Endothelial cell of umbilical vein (primary cell): ENCODE measurements at regions of chr6 and their contacts with region 1.

Region 1: GRCh38 chr6:33271458-33272274 is at the starts of genes RPS18 and VPS52:
- DNase-seq: peak; percentile 99
- H3K4me3 ChIP-seq: peak within 1 kb of the TSS; percentile 83 to 96 (median 86)
- H3K27ac ChIP-seq: peak within 1 kb of the TSS; percentile 85
- H3K4me1 ChIP-seq: peaks cover 47% of the 10 kb centered on the region
- H3K27me3 ChIP-seq: no peaks in the 10 kb centered on the region
- CTCF ChIP-seq: no peak
- POLR2A ChIP-seq: peak; percentile 99
- total RNA-seq, gene RPS18: 2,193 and 2,336 TPM in 2 replicates
- total RNA-seq, gene VPS52: 43.8 and 49.2 TPM in 2 replicates

Region 2: GRCh38 chr6:32317541-32317940 is 954.1 kb before region 1 on chr6:
- CTCF ChIA-PET with region 1: no interaction called
- POLR2A ChIA-PET with region 1: no interaction called
- dilution Hi-C with region 1: no loop called
- intact Hi-C with region 1: no loop called
- DNase-seq: no peak
- H3K4me3 ChIP-seq: no peak overlapping the region
- H3K27ac ChIP-seq: no peak overlapping the region
- H3K4me1 ChIP-seq: no peaks in the 10 kb centered on the region
- H3K27me3 ChIP-seq: peaks cover 6 to 8% of the 10 kb centered on the region in 2 experiments
- CTCF ChIP-seq: no peak
- POLR2A ChIP-seq: no peak

Region 3: DNA sequence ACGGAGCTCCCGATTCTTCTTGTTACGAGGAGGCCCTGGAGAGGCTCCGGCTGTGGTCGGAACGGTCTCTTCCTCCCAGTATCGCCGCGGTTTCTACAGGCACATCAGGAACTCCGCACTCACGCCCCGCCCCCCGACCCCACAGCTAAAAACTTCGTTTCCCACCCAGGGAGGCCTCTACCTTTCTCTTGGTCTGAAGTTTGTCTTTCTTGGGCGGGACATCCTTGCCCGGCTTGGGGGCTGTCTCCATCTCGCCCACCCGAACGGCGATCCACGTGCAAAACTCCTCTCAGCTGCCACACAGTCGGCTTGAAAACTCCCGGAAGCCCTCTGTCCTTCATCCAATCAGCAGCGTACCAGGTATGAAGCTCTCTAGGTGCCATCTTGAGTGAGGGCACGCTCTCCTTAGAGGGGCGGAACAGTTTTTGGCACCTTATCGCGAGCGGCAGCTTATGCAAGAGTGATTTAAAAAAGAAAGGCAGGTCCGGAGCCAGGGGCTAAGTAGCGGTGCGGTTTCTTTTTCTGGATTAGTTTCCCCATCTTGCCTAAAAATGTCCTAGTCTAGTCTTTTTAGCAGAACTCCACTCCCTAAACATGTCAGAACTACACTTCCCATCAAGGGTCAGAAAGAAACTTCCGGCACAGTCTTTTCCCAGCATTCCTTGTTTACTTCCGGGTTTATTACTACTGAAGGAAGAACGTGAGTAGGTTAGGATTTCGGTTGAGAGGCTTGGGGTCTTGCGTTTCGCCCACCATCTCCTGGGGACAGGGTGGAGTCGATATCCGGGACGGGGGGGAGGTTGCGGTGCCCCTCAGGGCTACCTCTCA is 17.5 kb after region 1 on chr6 and contains the starts of genes PFDN6 and WDR46:
- CTCF ChIA-PET with region 1: interaction called, 17 read pairs
- POLR2A ChIA-PET with region 1: interaction called, 6 read pairs
- dilution Hi-C with region 1: no loop called
- intact Hi-C with region 1: loop called (anchors 1 kb)
- DNase-seq: peak; percentile 96
- H3K4me3 ChIP-seq: peak within 1 kb of the TSS; percentile 59 to 96 (median 88)
- H3K27ac ChIP-seq: peak within 1 kb of the TSS; percentile 16
- H3K4me1 ChIP-seq: peaks cover 13% of the 10 kb centered on the region
- H3K27me3 ChIP-seq: no peaks in the 10 kb centered on the region
- CTCF ChIP-seq: no peak
- POLR2A ChIP-seq: peak; percentile 81
- total RNA-seq, gene PFDN6: 52.3 and 63.5 TPM in 2 replicates
- total RNA-seq, gene WDR46: 66.9 and 71.2 TPM in 2 replicates

Region 4: DNA sequence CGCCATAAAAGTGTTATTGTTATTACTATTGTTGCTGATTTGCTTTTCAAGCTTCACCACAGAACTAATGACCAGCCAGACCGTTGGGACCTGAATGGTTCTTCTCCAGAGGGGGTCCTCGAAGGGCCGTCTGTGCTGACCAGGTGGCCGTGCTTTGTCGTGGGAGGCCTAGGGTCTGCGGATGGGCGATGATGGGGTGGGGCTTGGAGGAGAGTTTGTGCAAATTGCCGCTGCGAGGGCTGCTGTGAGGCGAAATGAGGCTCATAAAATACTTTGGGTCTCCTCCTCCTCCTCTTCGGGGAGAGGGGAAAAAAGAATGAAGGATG is 51.9 kb after region 1 on chr6:
- CTCF ChIA-PET with region 1: interaction called, 4 read pairs
- POLR2A ChIA-PET with region 1: interaction called, 6 read pairs
- dilution Hi-C with region 1: no loop called
- intact Hi-C with region 1: loop called (anchors 1 kb)
- DNase-seq: no peak
- H3K4me3 ChIP-seq: peak overlapping the region; percentile 37 to 80 (median 80)
- H3K27ac ChIP-seq: no peak overlapping the region
- H3K4me1 ChIP-seq: peaks cover 43% of the 10 kb centered on the region
- H3K27me3 ChIP-seq: no peaks in the 10 kb centered on the region
- CTCF ChIP-seq: no peak
- POLR2A ChIP-seq: no peak

Region 5: DNA sequence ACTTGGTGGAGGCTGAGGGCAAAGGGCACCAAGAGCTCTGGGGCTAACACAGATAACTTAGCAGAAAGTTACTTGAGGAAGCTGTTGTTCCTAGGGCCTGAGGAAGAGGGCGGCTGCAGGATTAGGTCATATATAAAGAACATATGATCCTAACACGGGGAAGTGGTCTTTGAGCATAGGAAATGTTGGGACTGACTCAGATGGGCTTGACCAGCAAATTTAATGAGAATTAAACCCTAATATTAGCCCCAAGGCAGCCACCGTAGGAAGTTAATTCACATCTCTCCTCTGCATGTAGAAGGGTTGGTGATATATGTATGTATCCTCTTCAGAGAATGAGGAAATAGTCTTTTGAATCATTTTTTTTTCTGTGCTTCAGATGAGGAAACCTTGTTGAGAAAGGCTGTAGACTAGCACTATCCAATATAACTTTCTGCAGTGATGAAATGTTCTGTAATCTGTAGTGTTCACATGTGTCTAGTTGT is 173.5 kb after region 1 on chr6:
- CTCF ChIA-PET with region 1: no interaction called
- POLR2A ChIA-PET with region 1: no interaction called
- dilution Hi-C with region 1: no loop called
- intact Hi-C with region 1: no loop called
- DNase-seq: no peak
- H3K4me3 ChIP-seq: no peak overlapping the region
- H3K27ac ChIP-seq: no peak overlapping the region
- H3K4me1 ChIP-seq: no peaks in the 10 kb centered on the region
- H3K27me3 ChIP-seq: no peaks in the 10 kb centered on the region
- CTCF ChIP-seq: no peak
- POLR2A ChIP-seq: no peak